Adrenal gland (tissue), 19 donors: ENCODE measurements at regions of chr15 and their contacts with region 1.

Region 1: DNA sequence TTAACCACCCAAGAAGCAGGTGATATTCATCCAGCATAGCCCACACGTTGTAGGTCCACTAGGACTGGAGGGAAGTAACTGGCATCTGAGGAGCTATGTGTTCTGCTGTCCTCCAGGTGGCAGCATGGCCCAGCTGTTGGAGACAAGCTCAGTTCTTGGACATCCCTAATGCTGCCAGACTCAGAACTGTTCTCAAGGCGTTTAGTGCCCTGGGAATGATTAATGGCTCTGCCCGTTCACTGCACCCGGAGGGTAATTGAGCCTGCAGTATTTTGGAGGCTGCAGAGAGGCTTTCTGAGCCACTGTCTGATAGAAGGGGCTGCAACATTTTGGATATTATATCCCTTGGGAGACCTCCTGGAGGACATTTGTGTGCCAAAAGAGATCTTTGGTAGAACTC is 521.2 kb upstream of the SEMA6D start:
- DNase-seq: peak; percentile 75 to 90 (median 81)
- H3K4me3 ChIP-seq: no peak overlapping the region
- H3K27ac ChIP-seq: no peak overlapping the region
- H3K4me1 ChIP-seq: no peaks in the 10 kb centered on the region
- H3K27me3 ChIP-seq: no peaks in the 10 kb centered on the region
- CTCF ChIP-seq: peak; percentile 53 to 90 (median 83)
- POLR2A ChIP-seq: no peak

Region 2: DNA sequence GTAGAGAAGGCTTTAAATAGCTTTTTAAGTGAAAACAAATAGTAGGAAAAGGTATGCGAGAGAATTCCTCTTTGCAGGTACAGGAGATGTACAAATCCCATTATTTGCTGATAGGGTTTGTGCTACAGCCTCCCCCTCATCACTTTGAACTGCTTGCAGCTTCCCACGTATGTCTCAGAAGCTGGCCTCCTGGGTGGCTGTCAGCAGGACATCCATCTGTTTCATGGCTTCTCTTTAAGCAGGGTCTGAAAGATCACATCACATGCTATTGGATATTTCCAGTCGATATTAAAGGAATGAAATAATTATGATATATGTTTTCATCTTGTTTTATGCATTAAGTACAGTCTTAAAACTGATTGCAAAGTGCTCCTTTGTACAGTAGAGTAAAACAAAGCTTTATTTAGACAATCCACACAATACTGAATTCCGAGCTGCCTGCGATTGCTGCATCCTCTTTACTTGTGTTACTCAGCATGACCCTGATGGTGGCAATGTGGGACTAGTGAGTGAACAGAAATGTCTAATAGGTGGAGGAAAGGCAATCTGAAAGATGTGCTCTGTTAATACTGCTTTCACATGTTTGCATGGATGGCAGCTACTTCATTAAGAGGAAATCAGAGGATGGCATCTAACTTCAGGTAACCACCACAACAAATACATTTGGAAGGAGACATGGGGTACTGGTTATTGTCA is 409.3 kb before region 1 on chr15:
- intact Hi-C with region 1: no loop called
- DNase-seq: peak in 1 of 7 donors; percentile 54
- H3K4me3 ChIP-seq: no peak overlapping the region
- H3K27ac ChIP-seq: no peak overlapping the region
- H3K4me1 ChIP-seq: no peaks in the 10 kb centered on the region
- H3K27me3 ChIP-seq: no peaks in the 10 kb centered on the region
- CTCF ChIP-seq: no peak
- POLR2A ChIP-seq: no peak

Region 3: GRCh38 chr15:47013446-47013845 is 182.6 kb before region 1 on chr15:
- intact Hi-C with region 1: no loop called
- DNase-seq: no peak
- H3K4me3 ChIP-seq: no peak overlapping the region
- H3K27ac ChIP-seq: no peak overlapping the region
- H3K4me1 ChIP-seq: no peaks in the 10 kb centered on the region
- H3K27me3 ChIP-seq: no peaks in the 10 kb centered on the region
- CTCF ChIP-seq: no peak
- POLR2A ChIP-seq: no peak

Region 4: DNA sequence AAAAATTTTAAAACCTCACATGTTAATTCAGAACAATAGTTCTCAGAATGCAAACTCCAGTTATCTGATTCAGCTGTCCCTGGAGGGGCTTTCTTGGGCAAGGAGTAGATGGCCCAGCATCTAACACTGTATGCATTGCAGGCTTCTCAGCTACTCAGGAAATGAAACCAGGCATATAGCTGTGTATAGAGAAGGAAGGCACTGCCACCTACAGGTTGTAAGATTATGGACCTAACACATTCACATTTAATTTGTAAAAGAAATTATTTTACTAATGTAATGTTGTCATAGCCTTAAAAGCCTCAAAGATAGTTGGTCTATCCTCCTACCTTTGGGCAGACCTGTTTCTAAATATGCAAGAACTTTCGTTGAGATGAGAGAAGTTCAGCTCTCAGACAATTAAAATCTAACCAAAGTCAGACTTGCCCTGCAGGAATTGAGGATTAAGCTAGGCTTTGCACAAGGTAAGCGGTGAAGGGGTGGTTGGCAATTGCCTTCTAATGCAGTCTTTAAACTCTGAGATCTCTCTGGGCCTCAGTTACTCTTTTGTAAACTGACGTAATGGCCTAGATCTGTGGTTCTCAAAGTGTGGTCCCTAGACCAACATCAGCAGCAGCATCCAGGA is 792.0 kb after region 1 on chr15:
- intact Hi-C with region 1: loop called (anchors 5 to 10 kb)
- DNase-seq: peak in 4 of 7 donors; percentile 28 to 45 (median 30)
- H3K4me3 ChIP-seq: no peak overlapping the region
- H3K27ac ChIP-seq: no peak overlapping the region
- H3K4me1 ChIP-seq: no peaks in the 10 kb centered on the region
- H3K27me3 ChIP-seq: no peaks in the 10 kb centered on the region
- CTCF ChIP-seq: peak; percentile 59 to 74 (median 68)
- POLR2A ChIP-seq: no peak

Region 5: GRCh38 chr15:48250640-48251076 is 1054.6 kb after region 1 on chr15:
- intact Hi-C with region 1: loop called in 1 of 2 experiments (anchors 10 kb)
- DNase-seq: peak in 5 of 7 donors; percentile 27 to 56 (median 52)
- H3K4me3 ChIP-seq: no peak overlapping the region
- H3K27ac ChIP-seq: no peak overlapping the region
- H3K4me1 ChIP-seq: no peaks in the 10 kb centered on the region
- H3K27me3 ChIP-seq: no peaks in the 10 kb centered on the region
- CTCF ChIP-seq: peak; percentile 57 to 83 (median 68)
- POLR2A ChIP-seq: no peak

Region 6: GRCh38 chr15:48285329-48286214 is 1089.5 kb after region 1 on chr15:
- intact Hi-C with region 1: loop called in 1 of 2 experiments (anchors 10 kb)
- DNase-seq: peak; percentile 47 to 78 (median 69)
- H3K4me3 ChIP-seq: peak overlapping the region in 1 of 4 donors; percentile 49
- H3K27ac ChIP-seq: peak overlapping the region in 1 of 5 donors; percentile 9
- H3K4me1 ChIP-seq: peaks cover 0 to 16% of the 10 kb centered on the region in 2 donors
- H3K27me3 ChIP-seq: no peaks in the 10 kb centered on the region
- CTCF ChIP-seq: peak; percentile 64 to 77 (median 69)
- POLR2A ChIP-seq: no peak